K562 (cell line): ENCODE measurements at regions of chr1 and their contacts with region 1.

Region 1: DNA sequence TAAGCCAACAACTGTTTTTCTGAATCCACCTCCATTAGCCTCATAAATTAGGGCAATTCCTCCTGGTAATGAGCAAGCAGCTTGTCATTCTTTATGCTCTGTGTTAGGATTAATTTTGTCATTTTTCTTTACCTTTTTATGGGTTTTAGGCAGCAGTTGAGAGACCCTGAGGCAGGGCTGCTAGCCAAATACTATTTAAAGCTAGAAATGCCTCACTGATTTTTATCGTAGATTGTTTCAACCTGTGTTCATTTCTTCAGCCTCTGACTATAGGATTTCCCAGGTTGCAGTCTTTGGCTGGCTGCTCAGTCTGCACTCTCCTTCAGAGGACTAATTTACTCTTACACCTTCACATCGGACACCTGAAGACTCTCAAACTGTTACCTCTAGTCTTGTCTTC is 61.9 kb upstream of the RABGAP1L start:
- DNase-seq: no peak
- ATAC-seq: no peak
- H3K4me3 ChIP-seq: no peak overlapping the region
- H3K27ac ChIP-seq: no peak overlapping the region
- H3K4me1 ChIP-seq: no peaks in the 10 kb centered on the region; a peak in 1 of 5 replicates
- H3K27me3 ChIP-seq: no peaks in the 10 kb centered on the region
- CTCF ChIP-seq: no peak
- EP300 ChIP-seq: no peak
- POLR2A ChIP-seq: no peak
- RAD21 ChIP-seq: no peak

Region 2: GRCh38 chr1:173886746-173887611 is 210.4 kb before region 1 on chr1:
- CTCF ChIA-PET with region 1: no interaction called
- POLR2A ChIA-PET with region 1: no interaction called
- in situ Hi-C with region 1: no loop called
- intact Hi-C with region 1: no loop called
- DNase-seq: no peak
- ATAC-seq: no peak
- H3K4me3 ChIP-seq: no peak overlapping the region
- H3K27ac ChIP-seq: no peak overlapping the region
- H3K4me1 ChIP-seq: no peaks in the 10 kb centered on the region
- H3K27me3 ChIP-seq: no peaks in the 10 kb centered on the region
- CTCF ChIP-seq: no peak
- EP300 ChIP-seq: no peak
- POLR2A ChIP-seq: no peak
- RAD21 ChIP-seq: no peak

Region 3: GRCh38 chr1:174217787-174218574 is 120.6 kb after region 1 on chr1:
- CTCF ChIA-PET with region 1: interaction called, 9 read pairs
- POLR2A ChIA-PET with region 1: no interaction called
- in situ Hi-C with region 1: loop called (anchors 10 kb)
- intact Hi-C with region 1: loop called (anchors 1 kb)
- DNase-seq: peak in 2 of 4 experiments; percentile 31 to 59
- ATAC-seq: peak; percentile 90
- H3K4me3 ChIP-seq: no peak overlapping the region
- H3K27ac ChIP-seq: no peak overlapping the region
- H3K4me1 ChIP-seq: peaks cover 0 to 3% of the 10 kb centered on the region in 2 experiments; a peak in 2 of 5 replicates
- H3K27me3 ChIP-seq: no peaks in the 10 kb centered on the region
- CTCF ChIP-seq: peak; percentile 58 to 95 (median 70)
- EP300 ChIP-seq: no peak
- POLR2A ChIP-seq: no peak
- RAD21 ChIP-seq: peak; percentile 89 to 93

Region 4: DNA sequence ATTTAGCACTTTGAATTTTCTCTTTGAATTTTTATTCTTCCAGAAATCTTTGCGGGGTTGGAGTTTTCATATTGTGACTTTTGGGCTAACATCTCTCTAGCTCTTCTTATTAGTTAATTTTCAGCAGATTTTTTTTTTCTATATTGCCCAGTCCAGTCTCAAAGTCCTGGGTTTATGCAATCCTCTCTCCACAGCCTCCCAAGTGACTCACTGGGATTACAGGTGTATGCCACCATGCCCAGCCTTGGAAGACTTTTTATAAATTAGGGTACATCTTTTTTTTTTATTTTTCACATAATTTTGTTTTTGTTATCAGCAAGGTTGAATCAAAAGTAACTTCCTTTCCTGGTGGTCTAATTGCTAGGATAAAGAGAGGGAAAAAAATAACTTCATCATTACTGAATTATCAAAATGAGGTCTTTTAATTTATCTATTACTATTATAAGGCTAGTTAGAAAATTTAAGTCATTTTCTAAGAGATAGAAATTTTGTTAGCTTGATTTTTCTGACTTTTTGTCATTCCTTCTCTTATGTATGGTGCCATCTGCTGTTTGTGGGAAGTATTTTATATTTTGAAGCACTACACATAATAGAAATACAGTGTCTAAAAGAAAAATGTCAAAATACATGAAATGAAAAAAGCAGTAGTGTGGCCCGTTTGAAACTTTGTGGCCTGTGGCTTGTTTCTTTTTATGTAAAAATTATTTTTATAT is 628.9 kb after region 1 on chr1:
- CTCF ChIA-PET with region 1: interaction called, 5 read pairs
- POLR2A ChIA-PET with region 1: no interaction called
- in situ Hi-C with region 1: loop called (anchors 10 kb)
- intact Hi-C with region 1: loop called (anchors 5 kb)
- DNase-seq: peak in 1 of 4 experiments; percentile 25
- ATAC-seq: peak; percentile 46; the same call in 1 of the 3 replicates
- H3K4me3 ChIP-seq: no peak overlapping the region
- H3K27ac ChIP-seq: no peak overlapping the region
- H3K4me1 ChIP-seq: no peaks in the 10 kb centered on the region
- H3K27me3 ChIP-seq: no peaks in the 10 kb centered on the region
- CTCF ChIP-seq: peak in 1 of 3 experiments; percentile 69; a peak in 3 of 6 replicates
- EP300 ChIP-seq: no peak
- POLR2A ChIP-seq: no peak
- RAD21 ChIP-seq: peak; percentile 53 to 75

Region 5: GRCh38 chr1:174736831-174737230 is 639.4 kb after region 1 on chr1:
- CTCF ChIA-PET with region 1: no interaction called
- POLR2A ChIA-PET with region 1: interaction called, 3 read pairs
- in situ Hi-C with region 1: loop called (anchors 10 kb)
- intact Hi-C with region 1: no loop called
- DNase-seq: no peak
- ATAC-seq: no peak
- H3K4me3 ChIP-seq: no peak overlapping the region
- H3K27ac ChIP-seq: no peak overlapping the region
- H3K4me1 ChIP-seq: no peaks in the 10 kb centered on the region
- H3K27me3 ChIP-seq: no peaks in the 10 kb centered on the region
- CTCF ChIP-seq: no peak
- EP300 ChIP-seq: no peak
- POLR2A ChIP-seq: no peak
- RAD21 ChIP-seq: no peak

Region 6: GRCh38 chr1:174743654-174744561 is 646.5 kb after region 1 on chr1:
- CTCF ChIA-PET with region 1: interaction called, 4 read pairs
- POLR2A ChIA-PET with region 1: no interaction called
- in situ Hi-C with region 1: loop called (anchors 10 kb)
- intact Hi-C with region 1: loop called (anchors 2 kb)
- DNase-seq: peak; percentile 32 to 55 (median 44)
- ATAC-seq: peak; percentile 40
- H3K4me3 ChIP-seq: no peak overlapping the region
- H3K27ac ChIP-seq: no peak overlapping the region
- H3K4me1 ChIP-seq: peaks cover 4 to 15% of the 10 kb centered on the region in 2 experiments
- H3K27me3 ChIP-seq: no peaks in the 10 kb centered on the region
- CTCF ChIP-seq: peak; percentile 46 to 85 (median 51); a peak in 5 of 6 replicates
- EP300 ChIP-seq: no peak
- POLR2A ChIP-seq: no peak
- RAD21 ChIP-seq: peak; percentile 55 to 64